Heart left ventricle (tissue), 16 donors: ENCODE measurements at regions of chr2 and their contacts with region 1.

Region 1: GRCh38 chr2:23414871-23415270 is 29.9 kb downstream of the KLHL29 start:
- DNase-seq: no peak
- ATAC-seq: no peak
- H3K4me3 ChIP-seq: no peak overlapping the region
- H3K27ac ChIP-seq: no peak overlapping the region
- H3K4me1 ChIP-seq: peaks cover 0 to 6% (median 0%) of the 10 kb centered on the region in 12 donors
- H3K27me3 ChIP-seq: no peaks in the 10 kb centered on the region
- CTCF ChIP-seq: no peak
- POLR2A ChIP-seq: no peak

Region 2: DNA sequence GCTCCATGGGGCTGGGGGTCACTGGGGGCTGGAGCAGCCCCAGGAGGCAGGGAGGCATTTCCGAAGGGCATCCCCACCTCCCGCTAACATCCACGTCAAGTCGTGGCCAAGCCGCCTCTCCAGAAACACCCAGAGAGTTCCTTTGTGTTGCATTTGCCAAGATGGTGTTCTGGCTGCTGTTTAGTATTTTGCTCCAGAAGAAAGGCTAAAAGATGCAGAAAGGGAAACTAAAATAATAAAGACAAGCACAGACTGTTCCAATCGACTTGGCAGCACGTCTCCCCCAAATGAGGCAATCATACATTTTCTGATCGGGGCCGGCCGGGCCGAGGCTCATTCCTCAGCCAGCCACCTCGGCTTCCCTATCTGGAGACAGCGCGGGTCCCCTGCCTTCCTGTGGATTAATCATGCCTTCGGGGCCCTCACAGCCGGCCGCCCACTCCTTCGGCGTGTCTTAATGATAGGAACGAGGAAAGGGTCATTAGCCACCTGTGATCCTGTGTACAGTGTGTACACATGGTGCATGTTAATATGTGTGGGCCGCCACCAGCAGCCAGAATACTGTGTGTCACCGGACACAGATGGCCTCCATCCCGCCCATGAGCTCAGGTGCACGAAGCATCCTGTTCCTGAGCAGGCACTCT is 139.3 kb after region 1 on chr2:
- intact Hi-C with region 1: loop called in 1 of 10 experiments (anchors 10 kb)
- DNase-seq: peak in 4 of 5 donors; percentile 38 to 74 (median 64)
- ATAC-seq: peak; percentile 61 to 82 (median 65)
- H3K4me3 ChIP-seq: no peak overlapping the region
- H3K27ac ChIP-seq: peak overlapping the region in 10 of 12 donors; percentile 9 to 72 (median 46)
- H3K4me1 ChIP-seq: peaks cover 0 to 22% (median 5%) of the 10 kb centered on the region in 12 donors
- H3K27me3 ChIP-seq: no peaks in the 10 kb centered on the region
- CTCF ChIP-seq: no peak
- POLR2A ChIP-seq: no peak

Region 3: DNA sequence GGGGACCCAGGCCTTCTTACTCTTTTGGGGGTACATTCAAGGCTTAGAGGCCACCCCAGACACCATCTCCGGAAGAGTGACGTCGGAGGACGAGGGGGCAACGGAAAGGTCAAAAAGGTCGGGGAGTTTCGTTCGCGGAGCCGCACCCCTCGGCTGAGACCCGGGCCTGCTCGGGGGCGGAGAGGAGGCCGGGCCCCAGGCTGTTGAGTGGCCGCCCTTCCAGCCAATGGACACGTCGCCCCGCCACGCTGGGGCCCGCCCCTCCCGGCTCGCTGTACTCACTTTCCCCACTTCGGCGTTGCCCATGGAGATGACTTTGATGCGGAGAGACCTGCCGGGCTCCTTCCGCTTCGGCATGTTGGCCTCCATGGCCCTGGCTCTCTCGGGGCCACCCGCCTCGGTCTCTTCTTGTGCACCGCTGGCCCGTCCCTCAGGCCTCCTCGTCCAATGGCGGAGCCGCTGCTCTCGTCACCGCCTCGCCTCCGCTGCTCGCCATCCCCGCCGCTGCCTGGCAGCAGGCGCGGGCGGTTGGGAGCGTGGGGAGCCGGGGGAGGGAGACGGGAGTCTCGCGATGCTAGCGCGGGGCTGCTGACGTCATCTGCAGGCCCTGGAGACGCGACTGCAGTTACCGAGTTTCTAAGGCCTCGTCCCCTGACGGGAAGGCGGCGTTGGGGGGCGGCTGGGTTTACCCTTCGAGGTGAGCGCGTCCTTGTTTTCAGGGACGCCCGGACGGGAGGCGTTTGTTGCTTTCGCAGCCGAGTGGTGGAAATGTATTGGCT is 1556.9 kb after region 1 on chr2 and contains the start of gene DNAJC27:
- intact Hi-C with region 1: no loop called
- DNase-seq: peak; percentile 98 to 99 (median 99)
- ATAC-seq: peak; percentile 95 to 97 (median 96)
- H3K4me3 ChIP-seq: peak within 1 kb of the TSS; percentile 70 to 94 (median 82)
- H3K27ac ChIP-seq: peak within 1 kb of the TSS; percentile 95 to 99 (median 98)
- H3K4me1 ChIP-seq: peaks cover 0 to 23% (median 13%) of the 10 kb centered on the region in 12 donors
- H3K27me3 ChIP-seq: no peaks in the 10 kb centered on the region
- CTCF ChIP-seq: no peak
- POLR2A ChIP-seq: peak; percentile 53 to 95
- total RNA-seq, gene DNAJC27: 5.1 to 13.6 (median 9.1) TPM